Sigmoid colon (tissue), 7 donors: ENCODE measurements at regions of chrX and their contacts with region 1.

Region 1: GRCh38 chrX:23742697-23743622 is at the start of gene ACOT9:
- DNase-seq: peak; percentile 99
- H3K4me3 ChIP-seq: peak within 1 kb of the TSS; percentile 49 to 76 (median 71)
- H3K27ac ChIP-seq: peak within 1 kb of the TSS; percentile 92 to 96 (median 93)
- H3K4me1 ChIP-seq: peaks cover 0 to 10% (median 0%) of the 10 kb centered on the region in 4 donors
- H3K27me3 ChIP-seq: no peaks in the 10 kb centered on the region
- CTCF ChIP-seq: no peak
- EP300 ChIP-seq: peak in 1 of 4 donors; percentile 21
- POLR2A ChIP-seq: peak; percentile 56 to 87
- total RNA-seq, gene ACOT9: 32.6 to 63.1 (median 51.3) TPM

Region 2: GRCh38 chrX:23694606-23695005 is 48.4 kb before region 1 on chrX:
- intact Hi-C with region 1: loop called (anchors 5 kb)
- DNase-seq: peak; percentile 82
- H3K4me3 ChIP-seq: no peak overlapping the region
- H3K27ac ChIP-seq: no peak overlapping the region
- H3K4me1 ChIP-seq: no peaks in the 10 kb centered on the region
- H3K27me3 ChIP-seq: no peaks in the 10 kb centered on the region
- CTCF ChIP-seq: peak in 1 of 4 experiments; percentile 54
- EP300 ChIP-seq: no peak
- POLR2A ChIP-seq: no peak

Region 3: GRCh38 chrX:23782863-23783568 is 40.1 kb after region 1 on chrX and contains the start of gene SAT1:
- intact Hi-C with region 1: loop called (anchors 2 kb)
- DNase-seq: peak; percentile 98
- H3K4me3 ChIP-seq: peak within 1 kb of the TSS; percentile 70 to 74 (median 71)
- H3K27ac ChIP-seq: peak within 1 kb of the TSS; percentile 91 to 96 (median 93)
- H3K4me1 ChIP-seq: peaks cover 0 to 9% (median 0%) of the 10 kb centered on the region in 4 donors
- H3K27me3 ChIP-seq: no peaks in the 10 kb centered on the region
- CTCF ChIP-seq: peak; percentile 53 to 76 (median 62)
- EP300 ChIP-seq: no peak
- POLR2A ChIP-seq: peak; percentile 95 to 97
- total RNA-seq, gene SAT1: 321 to 371 (median 343) TPM

Region 4: GRCh38 chrX:23901805-23902204 is 158.8 kb after region 1 on chrX:
- intact Hi-C with region 1: loop called (anchors 5 kb)
- DNase-seq: peak; percentile 70
- H3K4me3 ChIP-seq: peak overlapping the region in 3 of 4 donors; percentile 20 to 26 (median 25)
- H3K27ac ChIP-seq: peak overlapping the region; percentile 54 to 73 (median 68)
- H3K4me1 ChIP-seq: peaks cover 0 to 37% (median 4%) of the 10 kb centered on the region in 4 donors
- H3K27me3 ChIP-seq: no peaks in the 10 kb centered on the region
- CTCF ChIP-seq: peak in 3 of 4 experiments; percentile 25 to 39 (median 38)
- EP300 ChIP-seq: no peak
- POLR2A ChIP-seq: no peak

Region 5: DNA sequence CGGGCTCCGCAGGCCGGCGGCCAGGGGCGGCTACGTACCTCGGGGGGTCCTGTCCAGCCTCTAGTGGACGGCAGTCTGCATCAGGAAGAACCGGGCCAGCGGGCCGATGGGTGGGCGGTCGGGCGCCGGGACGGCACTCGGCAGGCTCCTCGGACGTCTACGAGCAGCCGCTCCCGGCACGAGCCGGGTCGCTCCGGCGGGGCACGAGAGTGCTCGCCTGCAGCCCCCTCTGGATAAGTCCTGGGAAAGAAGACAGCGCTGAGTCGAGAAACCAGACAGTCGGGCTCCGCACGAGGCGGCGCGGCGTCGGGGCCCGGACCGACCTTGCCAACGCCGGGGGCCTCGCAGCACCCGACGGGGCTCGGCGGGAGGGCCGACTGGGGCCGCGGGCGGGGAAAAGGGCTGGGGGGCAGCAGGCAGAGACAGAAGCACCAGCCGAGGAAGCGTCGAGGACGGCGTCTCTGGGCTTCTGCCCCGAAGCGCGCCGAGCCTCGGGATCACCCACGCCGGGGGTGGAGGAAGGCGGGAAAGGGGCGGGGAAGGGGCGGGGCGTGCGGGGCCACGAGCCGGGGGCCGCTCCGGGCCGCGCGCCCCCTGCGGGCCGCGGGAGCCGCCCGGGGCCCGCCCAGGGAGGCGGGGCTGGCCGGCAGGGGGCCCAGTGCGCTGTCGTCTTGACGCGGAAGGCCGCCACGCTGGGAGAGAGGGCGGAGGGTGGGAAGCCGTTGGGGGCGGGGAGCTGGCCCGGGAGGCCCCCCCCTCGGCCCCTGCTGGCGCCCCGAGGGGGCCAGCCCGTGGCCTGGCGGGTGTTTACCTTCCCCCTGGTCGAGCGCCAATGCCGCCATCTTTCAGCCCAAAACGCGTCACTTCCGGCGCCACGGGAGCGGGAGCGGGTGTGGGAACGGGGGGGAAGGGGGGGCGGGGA is 282.1 kb after region 1 on chrX:
- intact Hi-C with region 1: loop called (anchors 1 kb)
- DNase-seq: peak; percentile 95
- H3K4me3 ChIP-seq: peak overlapping the region; percentile 73 to 83 (median 79)
- H3K27ac ChIP-seq: peak overlapping the region; percentile 93 to 98 (median 96)
- H3K4me1 ChIP-seq: peaks cover 0 to 10% (median 4%) of the 10 kb centered on the region in 4 donors
- H3K27me3 ChIP-seq: no peaks in the 10 kb centered on the region
- CTCF ChIP-seq: no peak
- EP300 ChIP-seq: peak in 2 of 4 donors; percentile 42 to 53
- POLR2A ChIP-seq: peak; percentile 27 to 54

Region 6: GRCh38 chrX:24054182-24055042 is 311.5 kb after region 1 on chrX and contains the start of gene EIF2S3:
- intact Hi-C with region 1: loop called (anchors 10 kb)
- DNase-seq: peak; percentile 96
- H3K4me3 ChIP-seq: peak within 1 kb of the TSS in 3 of 4 donors; percentile 67 to 81 (median 70)
- H3K27ac ChIP-seq: peak within 1 kb of the TSS in 2 of 4 donors; percentile 89 to 91
- H3K4me1 ChIP-seq: peaks cover 0 to 6% (median 0%) of the 10 kb centered on the region in 4 donors
- H3K27me3 ChIP-seq: no peaks in the 10 kb centered on the region
- CTCF ChIP-seq: peak in 3 of 4 experiments; percentile 32 to 43 (median 43)
- EP300 ChIP-seq: peak in 1 of 4 donors; percentile 65
- POLR2A ChIP-seq: peak in 1 of 2 donors; percentile 27
- total RNA-seq, gene EIF2S3: 134 to 222 (median 143) TPM